GM12878 (cell line): ENCODE measurements at regions of chr3 and their contacts with region 1.

Region 1: GRCh38 chr3:102006812-102007485 is 157.6 kb downstream of the NFKBIZ start:
- DNase-seq: no peak
- ATAC-seq: peak; percentile 49
- H3K4me3 ChIP-seq: no peak overlapping the region
- H3K27ac ChIP-seq: no peak overlapping the region
- H3K4me1 ChIP-seq: no peaks in the 10 kb centered on the region
- H3K27me3 ChIP-seq: no peaks in the 10 kb centered on the region
- CTCF ChIP-seq: no peak
- EP300 ChIP-seq: 0 out of 4 replicates have a peak, but pooled peaks of 1 of the 2 experiments have one; percentile 13
- POLR2A ChIP-seq: no peak
- RAD21 ChIP-seq: no peak

Region 2: GRCh38 chr3:101995371-101996046 is 11.4 kb before region 1 on chr3:
- CTCF ChIA-PET with region 1: interaction called, 11 read pairs
- POLR2A ChIA-PET with region 1: interaction called, 3 read pairs
- RAD21 ChIA-PET with region 1: interaction called, 3 read pairs
- SMC1A ChIA-PET with region 1: interaction called, 27 read pairs
- in situ Hi-C with region 1: no loop called
- intact Hi-C with region 1: no loop called
- DNase-seq: no peak
- ATAC-seq: peak; percentile 26; the same call in 1 of the 3 replicates
- H3K4me3 ChIP-seq: no peak overlapping the region
- H3K27ac ChIP-seq: peak overlapping the region; percentile 22; the same call in 1 of the 2 replicates
- H3K4me1 ChIP-seq: peaks cover 29% of the 10 kb centered on the region
- H3K27me3 ChIP-seq: no peaks in the 10 kb centered on the region
- CTCF ChIP-seq: no peak
- EP300 ChIP-seq: no peak
- POLR2A ChIP-seq: no peak
- RAD21 ChIP-seq: no peak

Region 3: DNA sequence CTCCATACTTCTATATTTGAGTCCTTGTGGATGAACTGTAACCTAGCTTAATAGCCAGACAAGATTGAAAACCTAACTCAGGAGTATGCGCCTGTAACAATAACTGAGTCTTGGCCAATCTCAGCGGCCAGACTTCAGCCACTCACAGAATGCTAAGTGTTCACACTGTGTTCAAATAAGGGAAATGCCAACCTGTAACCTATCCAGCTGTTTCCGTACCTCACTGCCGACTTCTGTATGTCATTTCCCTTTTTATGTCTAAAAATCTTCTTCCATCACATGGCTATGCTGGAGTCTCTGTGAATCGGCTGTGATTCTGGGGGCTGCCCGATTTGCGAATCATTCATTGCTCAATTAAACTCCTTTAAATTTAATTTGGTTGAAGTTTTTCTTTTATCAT is 11.6 kb after region 1 on chr3:
- CTCF ChIA-PET with region 1: interaction called, 6 read pairs
- POLR2A ChIA-PET with region 1: interaction called, 3 read pairs
- RAD21 ChIA-PET with region 1: interaction called, 6 read pairs
- SMC1A ChIA-PET with region 1: interaction called, 17 read pairs
- in situ Hi-C with region 1: no loop called
- intact Hi-C with region 1: no loop called
- DNase-seq: no peak
- ATAC-seq: no peak
- H3K4me3 ChIP-seq: no peak overlapping the region
- H3K27ac ChIP-seq: no peak overlapping the region
- H3K4me1 ChIP-seq: peaks cover 8% of the 10 kb centered on the region; the same call in 1 of the 2 replicates
- H3K27me3 ChIP-seq: no peaks in the 10 kb centered on the region
- CTCF ChIP-seq: no peak
- EP300 ChIP-seq: no peak
- POLR2A ChIP-seq: no peak
- RAD21 ChIP-seq: no peak

Region 4: GRCh38 chr3:102024270-102024904 is 17.4 kb after region 1 on chr3:
- CTCF ChIA-PET with region 1: interaction called, 6 read pairs
- POLR2A ChIA-PET with region 1: interaction called, 3 read pairs
- RAD21 ChIA-PET with region 1: no interaction called
- SMC1A ChIA-PET with region 1: interaction called, 17 read pairs
- in situ Hi-C with region 1: no loop called
- intact Hi-C with region 1: no loop called
- DNase-seq: no peak
- ATAC-seq: peak; percentile 59
- H3K4me3 ChIP-seq: no peak overlapping the region
- H3K27ac ChIP-seq: no peak overlapping the region
- H3K4me1 ChIP-seq: no peaks in the 10 kb centered on the region
- H3K27me3 ChIP-seq: no peaks in the 10 kb centered on the region
- CTCF ChIP-seq: no peak
- EP300 ChIP-seq: no peak
- POLR2A ChIP-seq: no peak
- RAD21 ChIP-seq: no peak